Heart right ventricle (tissue), 16 donors: ENCODE measurements at regions of chr11 and their contacts with region 1.

Region 1: DNA sequence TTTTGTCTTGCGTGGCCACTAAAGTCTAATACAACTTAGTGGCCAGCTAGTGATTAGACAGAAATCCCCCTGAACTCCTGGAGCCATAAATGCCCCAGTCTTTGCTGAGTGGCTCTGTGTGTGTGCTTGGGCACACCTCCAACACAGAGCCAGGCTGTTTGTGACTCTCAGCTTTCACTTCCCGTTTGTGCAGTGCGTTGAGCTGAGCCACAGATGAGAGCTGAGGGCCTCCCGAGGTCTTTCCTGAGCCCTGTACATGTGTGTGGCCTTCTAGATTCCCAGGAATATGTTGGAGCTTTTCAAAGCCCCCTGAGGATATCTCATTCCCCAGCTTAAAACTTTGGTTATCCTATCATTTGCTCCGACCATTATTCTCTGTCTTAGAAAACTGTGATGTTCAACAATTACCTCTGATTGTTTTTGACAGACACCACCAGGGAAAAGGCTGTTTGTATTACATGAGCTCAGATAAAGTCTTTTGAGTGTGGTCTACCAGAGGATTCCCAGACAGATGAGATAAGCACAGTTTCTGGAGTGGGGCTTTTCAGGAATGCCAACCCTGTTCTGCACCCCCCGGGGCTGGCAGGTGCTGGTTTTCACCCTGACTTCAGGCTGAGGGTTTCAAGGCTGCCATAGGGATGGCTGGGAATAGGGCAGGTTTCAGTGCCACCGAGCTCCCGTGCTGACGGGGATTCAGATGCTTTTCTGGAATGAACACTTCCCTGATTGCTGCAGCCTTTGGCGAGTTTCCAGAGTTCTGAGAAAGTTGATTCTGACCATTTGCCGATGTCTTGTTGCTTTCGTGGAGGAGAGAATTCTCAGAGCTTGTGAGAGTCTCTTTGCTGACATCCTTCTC is 23.8 kb downstream of the IGHMBP2 start:
- DNase-seq: no peak
- ATAC-seq: peak in 7 of 8 donors; percentile 4 to 59 (median 49)
- H3K4me3 ChIP-seq: no peak overlapping the region
- H3K27ac ChIP-seq: peak overlapping the region in 9 of 10 donors; percentile 28 to 82 (median 49)
- H3K4me1 ChIP-seq: peaks cover 13 to 40% (median 30%) of the 10 kb centered on the region in 9 donors
- H3K27me3 ChIP-seq: no peaks in the 10 kb centered on the region
- CTCF ChIP-seq: no peak

Region 2: DNA sequence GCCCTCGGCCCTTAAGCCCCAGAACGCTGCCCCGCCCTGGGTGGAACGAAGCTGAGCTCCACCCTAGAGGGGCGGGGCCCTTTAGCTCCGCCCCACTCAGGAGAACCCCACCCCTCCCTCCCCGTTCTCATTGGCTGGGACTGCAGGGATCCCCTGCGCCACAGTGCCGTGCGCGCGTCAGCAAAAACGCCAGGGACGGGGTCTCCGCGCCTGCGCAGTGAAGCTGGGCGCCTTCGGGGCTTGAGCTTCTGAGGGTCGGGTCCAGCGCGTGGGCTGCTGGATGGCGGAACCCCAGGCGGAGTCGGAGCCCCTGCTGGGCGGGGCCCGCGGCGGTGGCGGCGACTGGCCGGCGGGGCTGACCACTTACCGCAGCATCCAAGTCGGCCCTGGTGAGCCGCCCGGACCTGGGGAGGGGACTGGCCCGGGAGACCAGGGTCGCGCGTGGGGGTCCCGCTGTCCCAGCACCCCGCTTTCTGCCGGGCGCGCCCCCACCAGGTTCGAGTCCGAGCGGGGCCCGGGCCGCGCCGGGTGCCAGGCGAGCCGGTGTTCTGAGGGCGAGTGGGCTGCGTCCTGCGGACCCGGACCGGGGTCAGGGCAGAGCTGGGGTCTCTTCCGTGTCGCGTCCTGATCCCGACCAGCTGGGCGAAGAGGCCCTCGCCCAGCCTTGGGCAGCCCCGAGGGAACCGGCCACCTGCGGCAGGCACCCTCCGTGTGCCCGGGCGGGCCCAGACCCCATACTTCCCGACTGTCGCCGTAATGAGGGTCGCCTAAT is 121.4 kb after region 1 on chr11 and contains the start of gene TPCN2:
- intact Hi-C with region 1: loop called in 8 of 10 experiments (anchors 5 to 10 kb)
- DNase-seq: peak; percentile 92 to 95
- ATAC-seq: peak; percentile 87 to 96 (median 94)
- H3K4me3 ChIP-seq: peak within 1 kb of the TSS; percentile 88 to 99 (median 94)
- H3K27ac ChIP-seq: peak within 1 kb of the TSS; percentile 66 to 99 (median 93)
- H3K4me1 ChIP-seq: peaks cover 4 to 60% (median 48%) of the 10 kb centered on the region in 9 donors
- H3K27me3 ChIP-seq: no peaks in the 10 kb centered on the region
- CTCF ChIP-seq: no peak
- total RNA-seq, gene TPCN2: 4.8 to 13.0 (median 7.8) TPM